ENCODE measurements at regions of chr2 and their contacts with region 1.

Region 1: GRCh38 chr2:119753041-119753929 is 6.4 kb upstream of the PTPN4 start:
- DNase-seq: peak; percentile 39 to 64
- ATAC-seq: peak; percentile 79 to 92
- H3K4me3 ChIP-seq: no peak overlapping the region
- H3K27ac ChIP-seq: no peak overlapping the region
- H3K4me1 ChIP-seq: peaks cover 29% of the 10 kb centered on the region
- CTCF ChIP-seq: peak; percentile 87
- EP300 ChIP-seq: no peak
- POLR2A ChIP-seq: no peak
- RAD21 ChIP-seq: peak; percentile 84 to 87

Region 2: GRCh38 chr2:119264781-119265692 is 488.2 kb before region 1 on chr2:
- CTCF ChIA-PET with region 1: no interaction called
- POLR2A ChIA-PET with region 1: no interaction called
- DNase-seq: peak; percentile 49 to 60
- ATAC-seq: peak; percentile 95 to 99
- H3K4me3 ChIP-seq: no peak overlapping the region
- H3K27ac ChIP-seq: no peak overlapping the region
- H3K4me1 ChIP-seq: no peaks in the 10 kb centered on the region
- CTCF ChIP-seq: peak; percentile 84
- EP300 ChIP-seq: no peak
- POLR2A ChIP-seq: no peak
- RAD21 ChIP-seq: peak; percentile 85 to 86

Region 3: GRCh38 chr2:119741868-119742267 is 11.4 kb before region 1 on chr2:
- CTCF ChIA-PET with region 1: interaction called, 15 read pairs
- POLR2A ChIA-PET with region 1: no interaction called
- DNase-seq: no peak
- ATAC-seq: no peak
- H3K4me3 ChIP-seq: no peak overlapping the region
- H3K27ac ChIP-seq: no peak overlapping the region
- H3K4me1 ChIP-seq: peaks cover 25% of the 10 kb centered on the region
- CTCF ChIP-seq: no peak
- EP300 ChIP-seq: no peak
- POLR2A ChIP-seq: no peak
- RAD21 ChIP-seq: no peak

Region 4: GRCh38 chr2:119820275-119820674 is 67.0 kb after region 1 on chr2:
- CTCF ChIA-PET with region 1: interaction called, 28 read pairs
- POLR2A ChIA-PET with region 1: no interaction called
- DNase-seq: peak in 1 of 2 experiments; percentile 58
- ATAC-seq: peak in 1 of 2 experiments; percentile 84; a peak in 3 of 6 replicates
- H3K4me3 ChIP-seq: no peak overlapping the region
- H3K27ac ChIP-seq: no peak overlapping the region
- H3K4me1 ChIP-seq: peaks cover 16% of the 10 kb centered on the region
- CTCF ChIP-seq: no peak
- EP300 ChIP-seq: no peak
- POLR2A ChIP-seq: no peak
- RAD21 ChIP-seq: no peak

Region 5: GRCh38 chr2:119826370-119826961 is 73.2 kb after region 1 on chr2:
- CTCF ChIA-PET with region 1: interaction called, 28 read pairs
- POLR2A ChIA-PET with region 1: no interaction called
- DNase-seq: peak; percentile 16 to 52
- ATAC-seq: peak; percentile 76 to 91; a peak in 5 of 6 replicates
- H3K4me3 ChIP-seq: no peak overlapping the region
- H3K27ac ChIP-seq: no peak overlapping the region
- H3K4me1 ChIP-seq: peaks cover 11% of the 10 kb centered on the region; the same call in 1 of the 3 replicates
- CTCF ChIP-seq: peak; percentile 63
- EP300 ChIP-seq: no peak
- POLR2A ChIP-seq: no peak
- RAD21 ChIP-seq: peak; percentile 48 to 65; a peak in 4 of 5 replicates

Region 6: GRCh38 chr2:119914266-119914665 is 161.0 kb after region 1 on chr2:
- CTCF ChIA-PET with region 1: no interaction called
- POLR2A ChIA-PET with region 1: no interaction called
- DNase-seq: no peak
- ATAC-seq: no peak
- H3K4me3 ChIP-seq: no peak overlapping the region
- H3K27ac ChIP-seq: no peak overlapping the region
- H3K4me1 ChIP-seq: no peaks in the 10 kb centered on the region
- CTCF ChIP-seq: no peak
- EP300 ChIP-seq: no peak
- POLR2A ChIP-seq: no peak
- RAD21 ChIP-seq: no peak

Measured in A549 (cell line).